ENCODE measurements at regions of chr11 and their contacts with region 1.

Region 1: GRCh38 chr11:2400069-2400760 is at the start of gene TSSC4:
- DNase-seq: peak; percentile 100
- ATAC-seq: peak; percentile 92
- H3K4me3 ChIP-seq: peak within 1 kb of the TSS; percentile 93 to 100
- H3K27ac ChIP-seq: peak within 1 kb of the TSS; percentile 97
- H3K4me1 ChIP-seq: peaks cover 20% of the 10 kb centered on the region
- H3K27me3 ChIP-seq: no peaks in the 10 kb centered on the region
- CTCF ChIP-seq: peak; percentile 100
- total RNA-seq, gene TSSC4: 132 TPM

Region 2: GRCh38 chr11:2305140-2305840 is 94.9 kb before region 1 on chr11:
- CTCF ChIA-PET with region 1: interaction called, 12 read pairs
- POLR2A ChIA-PET with region 1: interaction called, 4 read pairs
- in situ Hi-C with region 1: no loop called
- intact Hi-C with region 1: no loop called
- DNase-seq: peak; percentile 35
- ATAC-seq: peak; percentile 88
- H3K4me3 ChIP-seq: no peak overlapping the region
- H3K27ac ChIP-seq: no peak overlapping the region
- H3K4me1 ChIP-seq: no peaks in the 10 kb centered on the region
- H3K27me3 ChIP-seq: no peaks in the 10 kb centered on the region
- CTCF ChIP-seq: peak; percentile 99

Region 3: DNA sequence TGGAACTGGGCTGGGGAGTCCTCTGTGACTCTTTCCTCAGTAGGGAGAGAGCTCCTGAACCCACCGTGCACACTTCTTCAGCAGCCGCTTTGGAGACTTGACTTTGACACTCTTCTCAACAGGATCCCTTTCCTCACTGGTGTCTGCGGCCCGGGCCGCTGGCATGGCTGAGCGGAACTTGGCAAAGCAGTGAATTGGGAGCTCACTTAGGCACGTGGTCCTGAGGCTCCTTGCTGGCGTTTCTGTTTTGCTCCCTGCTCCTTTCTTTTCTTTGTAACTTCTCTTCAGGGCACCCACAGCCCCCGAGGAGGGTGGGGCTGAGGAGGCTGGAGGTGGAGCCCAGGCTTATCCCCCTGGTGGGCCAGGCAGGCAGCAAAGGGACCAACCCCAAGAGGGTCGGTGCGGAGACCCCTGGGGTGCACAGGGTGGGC is 308.0 kb after region 1 on chr11:
- CTCF ChIA-PET with region 1: no interaction called
- POLR2A ChIA-PET with region 1: interaction called, 21 read pairs
- in situ Hi-C with region 1: no loop called
- intact Hi-C with region 1: no loop called
- DNase-seq: no peak
- ATAC-seq: no peak
- H3K4me3 ChIP-seq: no peak overlapping the region
- H3K27ac ChIP-seq: no peak overlapping the region
- H3K4me1 ChIP-seq: 0 out of 2 replicates have a peak, but pooled peaks cover 2% of the 10 kb centered on the region
- H3K27me3 ChIP-seq: no peaks in the 10 kb centered on the region
- CTCF ChIP-seq: no peak